ENCODE measurements at regions of chr4 and their contacts with region 1.

Region 1: DNA sequence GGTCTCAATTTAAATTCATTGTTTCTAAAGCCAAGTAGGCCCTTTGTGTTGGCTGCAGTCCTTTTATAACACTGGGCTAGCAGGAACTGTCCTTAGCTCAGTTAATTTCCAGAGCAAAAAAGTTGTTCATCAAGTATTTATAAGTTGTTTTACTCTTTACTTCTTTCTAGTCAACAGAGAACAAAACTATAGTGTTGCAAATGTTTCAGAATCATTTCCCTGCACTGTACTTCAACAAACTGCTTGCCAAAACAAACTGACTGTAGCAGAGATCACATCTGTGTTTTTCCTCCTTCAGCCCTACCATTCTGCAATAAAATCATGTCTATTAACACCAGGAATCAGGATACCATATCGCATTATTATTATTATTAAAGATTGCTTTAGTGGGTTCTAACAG is 168.5 kb upstream of the SH3RF1 start:
- DNase-seq: no peak
- H3K4me3 ChIP-seq: no peak overlapping the region
- H3K27ac ChIP-seq: no peak overlapping the region
- H3K27me3 ChIP-seq: no peaks in the 10 kb centered on the region
- CTCF ChIP-seq: no peak

Region 2: DNA sequence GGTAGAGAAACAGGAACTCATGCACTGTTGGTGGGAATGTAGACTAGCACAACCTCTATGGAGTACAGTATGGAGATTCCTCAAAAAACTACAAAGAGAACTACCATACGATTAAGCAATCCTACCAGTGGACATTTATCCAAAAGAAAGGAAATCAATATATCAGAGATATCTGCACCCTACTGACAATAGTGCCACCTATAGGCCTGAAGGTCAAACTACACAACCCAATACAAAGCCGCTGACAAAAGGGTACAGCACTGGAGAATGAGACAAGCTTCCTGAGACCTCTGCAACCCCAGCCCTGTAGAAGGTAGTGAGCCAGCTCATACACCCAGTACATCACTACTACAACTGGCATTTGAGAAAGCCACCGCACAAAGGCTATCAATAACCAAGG is 496.3 kb before region 1 on chr4:
- CTCF ChIA-PET with region 1: no interaction called
- POLR2A ChIA-PET with region 1: no interaction called
- DNase-seq: no peak
- H3K4me3 ChIP-seq: no peak overlapping the region
- H3K27ac ChIP-seq: no peak overlapping the region
- H3K27me3 ChIP-seq: no peaks in the 10 kb centered on the region
- CTCF ChIP-seq: peak; percentile 48

Region 3: DNA sequence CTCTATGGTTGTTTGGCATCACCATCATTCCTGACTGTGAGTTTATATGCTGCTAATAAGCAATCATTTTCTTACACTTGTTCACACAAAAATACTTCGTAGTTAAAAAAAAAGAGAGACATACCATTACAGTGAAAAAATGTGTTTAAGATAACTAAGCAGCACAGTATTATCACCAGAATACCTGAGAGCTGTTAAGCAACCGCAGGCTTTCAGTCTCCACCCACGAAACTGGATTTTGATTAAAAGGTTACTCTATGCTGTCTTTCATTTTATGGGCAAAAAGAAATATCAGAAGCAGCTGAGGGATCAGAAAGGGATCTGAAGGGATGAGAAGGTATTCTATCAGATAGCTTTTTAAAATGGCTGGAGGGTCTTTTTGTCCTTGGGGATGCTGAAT is 24.8 kb after region 1 on chr4:
- CTCF ChIA-PET with region 1: interaction called, 11 read pairs
- POLR2A ChIA-PET with region 1: no interaction called
- DNase-seq: no peak
- H3K4me3 ChIP-seq: no peak overlapping the region
- H3K27ac ChIP-seq: no peak overlapping the region
- H3K27me3 ChIP-seq: no peaks in the 10 kb centered on the region
- CTCF ChIP-seq: no peak

Region 4: DNA sequence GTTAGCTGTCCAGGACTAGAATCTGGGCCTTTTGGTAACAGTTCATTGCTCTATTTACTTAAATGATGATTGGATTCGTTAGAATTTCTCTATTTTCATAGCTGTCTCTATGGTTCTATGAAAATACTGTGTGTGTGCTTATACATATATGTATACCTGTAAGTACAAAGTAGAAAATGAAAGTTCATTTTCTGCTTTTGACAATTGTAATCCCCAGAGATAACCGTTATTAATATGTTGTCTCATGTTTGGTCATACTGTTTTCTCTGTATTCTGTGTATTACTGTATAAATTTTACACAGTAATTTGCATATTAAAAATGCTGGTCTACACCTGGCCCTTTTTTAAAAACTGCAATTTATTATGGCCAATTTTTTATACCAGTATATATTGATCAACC is 236.6 kb after region 1 on chr4:
- CTCF ChIA-PET with region 1: no interaction called
- POLR2A ChIA-PET with region 1: no interaction called
- DNase-seq: no peak
- H3K4me3 ChIP-seq: no peak overlapping the region
- H3K27ac ChIP-seq: no peak overlapping the region
- H3K27me3 ChIP-seq: no peaks in the 10 kb centered on the region
- CTCF ChIP-seq: no peak

Measured in AG04450 (cell line).